Aorta (tissue), 5 donors: ENCODE measurements at regions of chr2 and their contacts with region 1.

Region 1: DNA sequence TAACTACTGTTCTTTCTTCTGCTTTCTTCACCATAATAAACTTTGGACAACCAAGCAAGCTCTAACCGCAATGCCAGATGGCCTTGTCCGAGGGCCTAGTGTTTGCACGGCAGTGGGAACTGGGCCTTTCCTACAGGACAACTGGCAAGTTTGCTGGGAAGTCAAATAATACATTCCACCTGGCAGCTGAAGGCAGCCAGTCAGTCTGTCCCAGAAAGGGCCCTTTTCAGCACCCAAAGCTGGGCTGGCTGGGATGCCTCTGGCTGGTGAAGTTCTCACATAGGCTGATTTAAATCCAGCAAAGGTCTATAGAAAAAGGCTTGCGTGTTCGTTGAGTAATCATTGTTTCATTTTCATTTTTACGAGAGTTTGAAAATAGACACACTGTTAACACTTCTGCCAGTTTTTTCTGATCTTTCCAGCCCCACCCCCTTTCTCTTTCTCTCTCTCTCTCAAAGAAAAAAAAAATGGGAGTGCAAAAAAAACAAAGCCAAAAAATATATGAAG is 110.0 kb upstream of the EPAS1 start:
- DNase-seq: peak in 1 of 2 donors; percentile 63
- ATAC-seq: peak; percentile 59
- H3K4me3 ChIP-seq: no peak overlapping the region
- H3K27ac ChIP-seq: peak overlapping the region in 1 of 2 donors; percentile 86
- H3K4me1 ChIP-seq: no peaks in the 10 kb centered on the region
- H3K27me3 ChIP-seq: no peaks in the 10 kb centered on the region

Region 2: DNA sequence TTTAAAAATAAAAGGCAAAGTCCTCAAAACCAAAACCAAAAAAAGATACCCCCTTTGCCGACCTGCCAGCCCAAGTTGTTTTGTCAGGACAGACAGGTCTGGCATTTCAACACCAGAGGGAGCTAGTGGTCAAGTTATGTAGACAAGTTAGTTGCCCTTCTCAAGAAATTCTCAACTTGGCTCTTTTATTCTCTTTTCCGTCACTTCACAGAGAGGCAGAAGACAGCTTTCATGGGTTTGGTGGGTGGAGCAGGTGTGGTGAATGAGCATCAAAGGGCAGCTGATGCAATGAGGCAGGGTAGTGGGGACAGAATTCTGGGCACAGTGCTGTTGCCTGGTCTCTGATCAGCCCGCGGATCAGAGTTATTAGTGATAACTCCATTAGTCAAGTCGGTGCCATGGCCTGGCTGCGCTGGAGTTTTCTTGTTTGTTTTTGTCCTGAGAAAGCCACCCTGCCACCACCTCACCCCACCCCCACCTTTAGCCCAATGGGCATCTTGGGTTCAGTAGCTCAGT is 193.6 kb before region 1 on chr2:
- intact Hi-C with region 1: no loop called
- DNase-seq: peak in 1 of 2 donors; percentile 69
- ATAC-seq: peak; percentile 86
- H3K4me3 ChIP-seq: no peak overlapping the region
- H3K27ac ChIP-seq: peak overlapping the region in 1 of 2 donors; percentile 68
- H3K4me1 ChIP-seq: no peaks in the 10 kb centered on the region
- H3K27me3 ChIP-seq: no peaks in the 10 kb centered on the region

Region 3: GRCh38 chr2:46134531-46135181 is 52.5 kb before region 1 on chr2:
- intact Hi-C with region 1: loop called in 1 of 2 experiments (anchors 10 kb)
- DNase-seq: no peak
- ATAC-seq: peak; percentile 68
- H3K4me3 ChIP-seq: no peak overlapping the region
- H3K27ac ChIP-seq: peak overlapping the region; percentile 79 to 97
- H3K4me1 ChIP-seq: peaks cover 6 to 10% of the 10 kb centered on the region in 2 donors
- H3K27me3 ChIP-seq: no peaks in the 10 kb centered on the region

Region 4: GRCh38 chr2:46230115-46230571 is 43.0 kb after region 1 on chr2:
- intact Hi-C with region 1: loop called in 1 of 2 experiments (anchors 2 kb)
- DNase-seq: peak in 1 of 2 donors; percentile 81
- ATAC-seq: peak; percentile 83
- H3K4me3 ChIP-seq: no peak overlapping the region
- H3K27ac ChIP-seq: no peak overlapping the region
- H3K4me1 ChIP-seq: peaks cover 0 to 2% of the 10 kb centered on the region in 2 donors
- H3K27me3 ChIP-seq: no peaks in the 10 kb centered on the region